Heart left ventricle (tissue), 16 donors: ENCODE measurements at regions of chr6 and their contacts with region 1.

Region 1: DNA sequence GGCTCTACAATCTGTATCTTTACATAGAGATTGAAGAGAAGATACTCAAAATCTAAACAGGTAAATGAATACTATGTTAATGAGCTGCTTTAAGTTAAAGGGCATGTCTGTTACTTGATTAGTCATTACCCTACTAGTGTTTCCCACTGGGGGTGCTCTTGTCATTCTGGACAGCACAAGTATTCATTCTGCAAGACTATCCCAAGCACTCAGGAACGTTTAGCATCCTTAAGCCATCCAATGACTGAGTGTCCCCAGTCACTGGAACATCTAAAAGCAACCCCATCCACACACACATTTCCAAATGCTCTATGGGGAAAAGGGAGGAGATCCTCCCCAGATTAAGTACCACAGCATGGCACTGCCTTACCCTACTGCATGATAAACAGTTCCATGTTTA is 25.7 kb downstream of the EZR start:
- DNase-seq: no peak
- ATAC-seq: peak; percentile 29 to 67 (median 55)
- H3K4me3 ChIP-seq: no peak overlapping the region
- H3K27ac ChIP-seq: peak overlapping the region in 1 of 12 donors; percentile 15
- H3K4me1 ChIP-seq: peaks cover 0 to 77% (median 27%) of the 10 kb centered on the region in 12 donors
- H3K27me3 ChIP-seq: no peaks in the 10 kb centered on the region
- CTCF ChIP-seq: peak in 11 of 12 donors; percentile 12 to 57 (median 38)
- POLR2A ChIP-seq: no peak

Region 2: GRCh38 chr6:158642097-158642601 is 151.3 kb before region 1 on chr6:
- intact Hi-C with region 1: no loop called
- DNase-seq: peak in 3 of 5 donors; percentile 49 to 70 (median 50)
- ATAC-seq: peak; percentile 25 to 41 (median 34)
- H3K4me3 ChIP-seq: peak overlapping the region in 9 of 12 donors; percentile 6 to 99 (median 93)
- H3K27ac ChIP-seq: peak overlapping the region; percentile 26 to 100 (median 96)
- H3K4me1 ChIP-seq: peaks cover 2 to 54% (median 42%) of the 10 kb centered on the region in 12 donors
- H3K27me3 ChIP-seq: no peaks in the 10 kb centered on the region
- CTCF ChIP-seq: no peak
- POLR2A ChIP-seq: no peak

Region 3: GRCh38 chr6:158737710-158738615 is 55.5 kb before region 1 on chr6:
- intact Hi-C with region 1: no loop called
- DNase-seq: no peak
- ATAC-seq: peak in 2 of 4 donors; percentile 56 to 58
- H3K4me3 ChIP-seq: no peak overlapping the region
- H3K27ac ChIP-seq: peak overlapping the region in 1 of 12 donors; percentile 19
- H3K4me1 ChIP-seq: peaks cover 0 to 7% (median 0%) of the 10 kb centered on the region in 12 donors
- H3K27me3 ChIP-seq: no peaks in the 10 kb centered on the region
- CTCF ChIP-seq: no peak
- POLR2A ChIP-seq: no peak

Region 4: DNA sequence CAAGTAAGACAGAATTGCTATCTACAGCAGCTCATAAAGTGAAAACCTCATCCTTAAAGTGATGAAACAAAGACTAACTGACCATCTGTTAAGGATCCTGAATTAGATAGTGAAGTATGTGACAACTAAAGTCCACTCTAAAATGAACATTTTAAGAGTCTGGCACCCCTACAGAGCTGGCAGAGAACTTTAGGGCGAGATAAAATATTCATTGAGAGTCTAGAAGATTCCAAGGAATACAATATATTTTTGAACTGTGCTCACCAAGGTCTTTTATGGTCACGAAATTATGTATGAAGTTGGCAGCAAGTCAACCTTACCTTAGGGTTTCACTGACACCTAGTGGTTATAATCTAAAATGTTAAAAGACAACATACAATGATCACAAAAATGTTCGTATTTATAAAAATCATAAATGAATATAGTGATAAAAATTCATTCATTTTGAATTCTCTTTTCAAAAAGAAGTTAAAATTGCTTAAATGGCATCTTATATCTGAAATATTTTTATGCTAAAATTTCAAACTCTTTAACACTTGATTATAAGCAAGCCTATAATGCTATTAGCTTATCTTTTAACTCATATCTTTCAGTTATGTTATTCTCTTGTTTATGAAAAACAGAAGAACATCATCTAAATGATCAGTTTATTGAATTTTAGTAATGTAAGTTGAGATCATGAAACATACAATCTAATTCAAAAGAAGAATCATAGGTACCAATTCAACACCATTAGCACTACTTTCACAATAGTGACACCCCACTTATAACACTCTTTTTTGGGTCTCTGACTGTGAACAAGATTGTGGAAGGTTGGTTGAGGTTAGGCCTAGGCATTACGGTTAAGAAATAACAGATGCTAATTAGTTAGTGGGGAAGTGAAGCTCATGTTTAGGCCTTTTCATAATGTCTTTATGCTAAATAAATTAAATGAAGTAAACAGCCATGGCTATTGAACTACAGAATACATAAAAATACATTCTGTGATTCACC is 179.1 kb after region 1 on chr6:
- intact Hi-C with region 1: loop called in 5 of 10 experiments (anchors 5 to 10 kb)
- DNase-seq: no peak
- ATAC-seq: peak in 1 of 4 donors; percentile 60
- H3K4me3 ChIP-seq: no peak overlapping the region
- H3K27ac ChIP-seq: no peak overlapping the region
- H3K4me1 ChIP-seq: peaks cover 0 to 5% (median 0%) of the 10 kb centered on the region in 12 donors
- H3K27me3 ChIP-seq: no peaks in the 10 kb centered on the region
- CTCF ChIP-seq: peak; percentile 34 to 73 (median 57)
- POLR2A ChIP-seq: no peak

Region 5: GRCh38 chr6:159665868-159666635 is 872.6 kb after region 1 on chr6:
- intact Hi-C with region 1: loop called in 1 of 10 experiments (anchors 10 kb)
- DNase-seq: no peak
- ATAC-seq: no peak
- H3K4me3 ChIP-seq: no peak overlapping the region
- H3K27ac ChIP-seq: no peak overlapping the region
- H3K4me1 ChIP-seq: no peaks in the 10 kb centered on the region
- H3K27me3 ChIP-seq: no peaks in the 10 kb centered on the region
- CTCF ChIP-seq: no peak
- POLR2A ChIP-seq: no peak